ENCODE measurements at regions of chr6 and their contacts with region 1.

Region 1: DNA sequence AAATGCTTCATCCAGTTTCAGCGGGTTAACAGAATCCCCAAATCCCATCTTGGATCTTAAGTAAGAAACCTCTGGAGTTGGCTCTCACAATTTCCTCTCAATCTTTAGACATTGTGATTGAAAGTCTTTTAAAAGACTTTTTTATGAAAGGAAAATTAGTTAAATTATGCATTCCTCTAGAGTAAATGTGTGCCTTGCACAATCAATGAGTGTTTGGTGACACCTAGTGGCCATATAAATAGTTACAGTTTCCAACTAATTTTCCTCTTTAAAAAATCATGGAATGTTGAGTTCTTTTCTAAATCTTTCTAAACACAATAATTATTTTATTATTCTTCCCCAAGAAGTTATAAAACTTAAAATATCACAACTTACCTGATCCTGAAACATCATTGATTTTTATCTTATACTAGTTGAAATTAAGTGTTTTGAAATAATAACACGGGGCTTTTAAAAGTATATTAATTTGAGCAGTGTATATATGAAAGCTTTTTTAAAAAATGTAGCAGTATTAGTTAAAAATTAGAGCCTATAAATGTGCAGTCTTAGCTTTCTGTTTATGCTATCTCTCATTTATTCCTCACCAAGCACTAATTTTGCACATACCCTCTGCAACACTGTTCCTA is 66.4 kb downstream of the PKHD1 start:
- DNase-seq: peak in 1 of 2 experiments; percentile 53
- H3K4me3 ChIP-seq: no peak overlapping the region
- H3K4me1 ChIP-seq: peaks cover 11% of the 10 kb centered on the region
- H3K27me3 ChIP-seq: peaks cover under 1% of the 10 kb centered on the region; the same call in 1 of the 2 replicates

Region 2: GRCh38 chr6:51855310-51856082 is 165.6 kb before region 1 on chr6:
- in situ Hi-C with region 1: loop called (anchors 25 kb)
- DNase-seq: peak; percentile 47 to 56
- H3K4me3 ChIP-seq: no peak overlapping the region
- H3K4me1 ChIP-seq: no peaks in the 10 kb centered on the region
- H3K27me3 ChIP-seq: no peaks in the 10 kb centered on the region; the same call in 1 of the 2 replicates

Region 3: DNA sequence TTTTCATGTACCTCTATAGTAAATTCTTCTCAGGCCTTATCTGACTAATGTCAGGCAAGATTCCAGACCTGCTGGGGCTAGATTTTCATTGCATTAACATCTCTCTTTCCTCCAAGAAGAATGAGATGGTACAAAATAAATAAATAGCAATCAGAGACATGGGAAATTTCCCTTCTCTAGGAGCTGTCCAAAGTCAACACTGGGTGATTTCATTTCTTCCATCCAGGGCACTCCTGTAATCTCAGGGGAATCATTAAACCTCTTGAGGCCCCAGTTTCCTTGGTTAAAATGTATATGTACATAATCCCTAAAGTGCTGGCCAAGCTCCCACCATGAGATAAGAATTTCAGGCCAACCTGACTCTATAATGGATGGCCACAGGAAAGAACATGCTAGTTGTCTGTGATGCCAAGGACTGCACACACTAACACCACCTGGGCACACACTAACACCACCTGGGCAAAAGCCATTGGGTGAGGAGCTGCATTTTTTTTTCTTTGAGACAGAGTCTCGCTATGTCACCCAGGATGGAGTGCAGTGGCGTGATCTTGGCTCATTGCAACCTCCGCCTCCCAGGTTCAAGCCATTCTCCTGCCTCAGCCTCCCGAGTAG is 222.3 kb after region 1 on chr6:
- in situ Hi-C with region 1: no loop called
- DNase-seq: no peak
- H3K4me3 ChIP-seq: no peak overlapping the region
- H3K4me1 ChIP-seq: no peaks in the 10 kb centered on the region
- H3K27me3 ChIP-seq: 0 out of 2 replicates have a peak, but pooled peaks cover 3% of the 10 kb centered on the region